Activated CD8-positive, alpha-beta T cell treated with anti-CD3 and anti-CD28 coated beads for 36 hours (primary cell): ENCODE measurements at regions of chr12 and their contacts with region 1.

Region 1: DNA sequence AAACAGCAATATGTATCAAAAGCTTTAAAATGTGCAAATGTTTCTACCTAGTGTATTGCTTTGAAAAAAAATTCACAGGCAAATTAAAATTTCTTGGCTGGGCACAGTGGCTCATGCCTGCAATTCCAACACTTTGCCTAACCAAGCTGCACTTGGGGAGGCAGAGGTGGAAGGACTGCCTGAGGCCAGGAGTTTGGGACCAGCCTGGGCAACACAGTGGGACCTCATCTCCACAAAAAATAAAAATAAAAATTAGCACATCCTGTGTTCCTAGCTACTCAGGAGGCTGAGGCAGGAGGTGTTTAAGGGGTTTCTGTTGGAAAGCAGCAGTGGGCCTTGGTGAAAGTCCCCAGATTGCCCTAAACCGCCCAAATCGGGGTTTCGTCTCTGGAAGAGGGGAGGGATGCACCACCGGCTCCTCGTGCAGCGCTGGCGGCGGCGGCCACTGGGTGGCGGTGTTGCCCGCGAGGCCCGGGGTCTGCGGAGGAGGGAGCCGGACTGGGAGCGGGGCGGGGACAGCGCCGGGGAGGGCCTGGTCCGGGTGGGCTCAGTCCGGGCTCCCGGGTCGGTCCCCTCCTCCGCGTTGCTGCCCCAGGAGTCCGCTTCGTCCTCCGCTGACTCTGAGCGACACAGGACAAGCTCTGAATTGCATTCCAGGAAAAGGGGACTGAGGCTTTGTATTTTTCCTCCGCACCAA is 265.6 kb downstream of the AACS start:
- DNase-seq: peak; percentile 65
- ATAC-seq: peak; percentile 67
- H3K4me3 Mint-ChIP-seq: no peak overlapping the region
- H3K27ac Mint-ChIP-seq: no peak overlapping the region
- H3K4me1 Mint-ChIP-seq: no peaks in the 10 kb centered on the region
- H3K27me3 Mint-ChIP-seq: peaks cover 26% of the 10 kb centered on the region
- CTCF ChIP-seq: peak; percentile 85

Region 2: DNA sequence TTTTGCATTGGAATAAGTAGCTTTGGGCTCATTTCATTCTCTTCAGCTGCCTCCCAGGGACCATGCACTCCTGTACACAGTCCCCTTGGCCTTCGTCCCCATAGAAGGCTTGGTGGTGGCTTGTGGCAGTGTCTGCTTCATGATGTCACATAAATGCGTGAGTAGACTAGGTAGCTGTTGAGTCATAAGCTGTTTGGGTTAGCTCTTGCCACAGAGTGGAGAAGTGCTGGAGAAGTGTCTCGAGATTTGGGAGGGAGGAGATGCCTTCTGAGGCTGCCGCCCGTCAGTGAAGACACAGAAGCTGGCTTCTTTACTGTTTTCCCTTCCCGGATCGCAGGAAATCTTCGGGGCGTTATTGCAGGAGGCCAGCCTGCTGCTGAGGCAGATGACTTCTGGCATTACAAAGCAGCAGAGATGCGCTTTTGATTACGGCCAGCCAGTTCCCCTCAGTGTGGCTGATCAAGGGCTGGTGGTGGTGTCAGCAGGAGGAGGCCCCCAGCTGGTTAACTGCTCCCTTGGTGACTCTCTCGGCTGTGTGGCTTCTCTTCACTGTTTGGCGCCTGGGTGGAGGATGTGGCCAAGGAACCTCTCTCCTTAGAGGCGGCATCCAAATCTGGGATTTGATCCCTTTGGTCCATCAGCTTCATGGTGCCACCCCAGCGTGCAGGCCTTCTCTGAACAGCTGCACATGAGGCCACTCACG is 197.9 kb before region 1 on chr12:
- CTCF ChIA-PET with region 1: no interaction called
- POLR2A ChIA-PET with region 1: no interaction called
- intact Hi-C with region 1: no loop called
- DNase-seq: no peak
- ATAC-seq: no peak
- H3K4me3 Mint-ChIP-seq: no peak overlapping the region
- H3K27ac Mint-ChIP-seq: no peak overlapping the region
- H3K4me1 Mint-ChIP-seq: no peaks in the 10 kb centered on the region
- H3K27me3 Mint-ChIP-seq: no peaks in the 10 kb centered on the region
- CTCF ChIP-seq: no peak

Region 3: GRCh38 chr12:125203145-125203765 is 127.5 kb before region 1 on chr12:
- CTCF ChIA-PET with region 1: no interaction called
- POLR2A ChIA-PET with region 1: no interaction called
- intact Hi-C with region 1: no loop called
- DNase-seq: no peak
- ATAC-seq: peak; percentile 27
- H3K4me3 Mint-ChIP-seq: no peak overlapping the region
- H3K27ac Mint-ChIP-seq: no peak overlapping the region
- H3K4me1 Mint-ChIP-seq: no peaks in the 10 kb centered on the region
- H3K27me3 Mint-ChIP-seq: peaks cover 18% of the 10 kb centered on the region
- CTCF ChIP-seq: peak; percentile 43

Region 4: GRCh38 chr12:125402874-125403789 is 72.3 kb after region 1 on chr12:
- CTCF ChIA-PET with region 1: interaction called, 13 read pairs
- POLR2A ChIA-PET with region 1: no interaction called
- intact Hi-C with region 1: loop called (anchors 5 kb)
- DNase-seq: peak; percentile 6
- ATAC-seq: no peak
- H3K4me3 Mint-ChIP-seq: no peak overlapping the region
- H3K27ac Mint-ChIP-seq: no peak overlapping the region
- H3K4me1 Mint-ChIP-seq: no peaks in the 10 kb centered on the region
- H3K27me3 Mint-ChIP-seq: peaks cover 9% of the 10 kb centered on the region
- CTCF ChIP-seq: peak; percentile 71

Region 5: GRCh38 chr12:125518074-125518473 is 187.3 kb after region 1 on chr12:
- CTCF ChIA-PET with region 1: no interaction called
- POLR2A ChIA-PET with region 1: no interaction called
- intact Hi-C with region 1: no loop called
- DNase-seq: no peak
- ATAC-seq: no peak
- H3K4me3 Mint-ChIP-seq: no peak overlapping the region
- H3K27ac Mint-ChIP-seq: no peak overlapping the region
- H3K4me1 Mint-ChIP-seq: no peaks in the 10 kb centered on the region
- H3K27me3 Mint-ChIP-seq: no peaks in the 10 kb centered on the region
- CTCF ChIP-seq: no peak

Region 6: GRCh38 chr12:125704803-125705202 is 374.0 kb after region 1 on chr12:
- CTCF ChIA-PET with region 1: no interaction called
- POLR2A ChIA-PET with region 1: no interaction called
- intact Hi-C with region 1: no loop called
- DNase-seq: no peak
- ATAC-seq: no peak
- H3K4me3 Mint-ChIP-seq: no peak overlapping the region
- H3K27ac Mint-ChIP-seq: no peak overlapping the region
- H3K4me1 Mint-ChIP-seq: no peaks in the 10 kb centered on the region
- H3K27me3 Mint-ChIP-seq: no peaks in the 10 kb centered on the region
- CTCF ChIP-seq: no peak